OCI-LY7 (cell line): ENCODE measurements at regions of chr15 and their contacts with region 1.

Region 1: GRCh38 chr15:45732662-45733061 is 97.8 kb downstream of the SQOR start:
- DNase-seq: no peak
- H3K4me3 ChIP-seq: no peak overlapping the region
- H3K27ac ChIP-seq: peak overlapping the region; percentile 99
- H3K4me1 ChIP-seq: peaks cover 75% of the 10 kb centered on the region
- CTCF ChIP-seq: no peak

Region 2: DNA sequence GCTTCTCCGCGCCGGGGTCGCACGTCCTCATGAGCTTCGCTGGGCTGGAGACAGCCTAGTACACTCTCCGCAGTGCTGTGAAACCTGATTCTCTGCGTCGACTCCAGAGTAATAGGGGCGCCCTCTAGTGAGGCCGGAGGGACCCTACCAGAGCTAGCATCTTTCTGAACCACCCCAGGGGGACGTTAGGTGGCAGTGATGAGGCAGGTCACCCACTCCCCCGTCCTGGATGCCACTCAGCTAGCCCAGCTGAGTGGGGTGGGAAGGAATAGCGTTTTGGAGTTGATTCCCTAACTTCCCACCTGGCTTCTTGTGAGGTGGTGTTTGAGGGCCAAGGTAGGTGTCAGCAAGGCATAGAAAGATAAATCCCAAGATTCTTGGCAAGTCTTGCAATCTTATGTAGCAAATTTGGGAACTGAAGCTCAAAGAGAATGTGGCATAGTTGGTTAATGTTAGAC is 614.5 kb before region 1 on chr15:
- CTCF ChIA-PET with region 1: no interaction called
- POLR2A ChIA-PET with region 1: no interaction called
- intact Hi-C with region 1: no loop called
- DNase-seq: peak; percentile 78
- H3K4me3 ChIP-seq: no peak overlapping the region
- H3K27ac ChIP-seq: no peak overlapping the region
- H3K4me1 ChIP-seq: no peaks in the 10 kb centered on the region
- CTCF ChIP-seq: peak; percentile 99

Region 3: DNA sequence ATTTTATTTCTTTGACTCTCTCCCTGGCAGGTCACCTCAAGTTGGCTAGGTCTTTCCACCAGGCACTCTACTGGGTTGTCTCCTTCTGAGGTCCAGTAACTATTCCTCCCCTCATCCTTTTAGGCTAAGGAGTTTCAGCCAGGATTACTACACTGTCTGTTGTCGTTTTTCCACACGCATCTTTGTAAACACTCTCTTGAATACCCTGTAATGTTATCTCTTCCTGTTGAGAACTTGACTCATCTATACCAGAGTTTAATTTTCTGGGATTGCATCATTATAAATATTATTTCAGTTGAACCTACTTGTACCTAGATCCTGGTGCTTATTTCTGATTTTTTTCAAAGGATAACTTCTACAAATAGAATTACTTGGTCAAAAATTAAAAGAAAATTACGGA is 40.5 kb after region 1 on chr15:
- CTCF ChIA-PET with region 1: interaction called, 5 read pairs
- POLR2A ChIA-PET with region 1: interaction called, 37 read pairs
- intact Hi-C with region 1: loop called (anchors 1 kb)
- DNase-seq: no peak
- H3K4me3 ChIP-seq: no peak overlapping the region
- H3K27ac ChIP-seq: no peak overlapping the region
- H3K4me1 ChIP-seq: peaks cover 31% of the 10 kb centered on the region
- CTCF ChIP-seq: no peak